ENCODE measurements at regions of chr1 and their contacts with region 1.

Region 1: GRCh38 chr1:66654643-66655042 is 97.6 kb upstream of the DYNLT5 start:
- DNase-seq: no peak
- H3K4me3 Mint-ChIP-seq: no peak overlapping the region
- H3K27ac Mint-ChIP-seq: no peak overlapping the region
- H3K4me1 Mint-ChIP-seq: no peaks in the 10 kb centered on the region
- H3K27me3 Mint-ChIP-seq: peaks cover 51% of the 10 kb centered on the region
- CTCF ChIP-seq: no peak

Region 2: DNA sequence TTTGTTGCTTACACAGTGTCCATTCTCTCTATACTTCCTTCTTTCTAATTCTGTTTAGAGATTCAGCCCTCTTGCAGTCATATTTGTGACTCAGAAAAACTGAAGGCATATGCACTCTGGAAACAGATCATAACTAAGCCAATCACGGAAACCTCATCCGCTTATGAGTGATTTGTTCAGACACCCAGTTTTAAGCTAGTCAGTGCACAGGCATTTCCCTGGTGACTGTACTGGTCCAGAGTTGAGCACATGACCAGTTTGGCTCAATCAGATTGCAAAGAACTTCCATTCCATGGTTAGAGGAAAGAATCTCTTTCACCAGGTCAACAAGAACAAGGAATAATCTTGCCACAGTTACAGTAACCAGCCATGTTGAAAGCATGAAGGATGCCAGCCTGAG is 189.8 kb before region 1 on chr1:
- CTCF ChIA-PET with region 1: no interaction called
- intact Hi-C with region 1: loop called (anchors 5 kb)
- DNase-seq: no peak
- H3K4me3 Mint-ChIP-seq: no peak overlapping the region
- H3K27ac Mint-ChIP-seq: no peak overlapping the region
- H3K4me1 Mint-ChIP-seq: peaks cover 7% of the 10 kb centered on the region
- H3K27me3 Mint-ChIP-seq: peaks cover 22% of the 10 kb centered on the region
- CTCF ChIP-seq: no peak

Measured in Calu3 (cell line).